ENCODE measurements at regions of chr19 and their contacts with region 1.

Region 1: DNA sequence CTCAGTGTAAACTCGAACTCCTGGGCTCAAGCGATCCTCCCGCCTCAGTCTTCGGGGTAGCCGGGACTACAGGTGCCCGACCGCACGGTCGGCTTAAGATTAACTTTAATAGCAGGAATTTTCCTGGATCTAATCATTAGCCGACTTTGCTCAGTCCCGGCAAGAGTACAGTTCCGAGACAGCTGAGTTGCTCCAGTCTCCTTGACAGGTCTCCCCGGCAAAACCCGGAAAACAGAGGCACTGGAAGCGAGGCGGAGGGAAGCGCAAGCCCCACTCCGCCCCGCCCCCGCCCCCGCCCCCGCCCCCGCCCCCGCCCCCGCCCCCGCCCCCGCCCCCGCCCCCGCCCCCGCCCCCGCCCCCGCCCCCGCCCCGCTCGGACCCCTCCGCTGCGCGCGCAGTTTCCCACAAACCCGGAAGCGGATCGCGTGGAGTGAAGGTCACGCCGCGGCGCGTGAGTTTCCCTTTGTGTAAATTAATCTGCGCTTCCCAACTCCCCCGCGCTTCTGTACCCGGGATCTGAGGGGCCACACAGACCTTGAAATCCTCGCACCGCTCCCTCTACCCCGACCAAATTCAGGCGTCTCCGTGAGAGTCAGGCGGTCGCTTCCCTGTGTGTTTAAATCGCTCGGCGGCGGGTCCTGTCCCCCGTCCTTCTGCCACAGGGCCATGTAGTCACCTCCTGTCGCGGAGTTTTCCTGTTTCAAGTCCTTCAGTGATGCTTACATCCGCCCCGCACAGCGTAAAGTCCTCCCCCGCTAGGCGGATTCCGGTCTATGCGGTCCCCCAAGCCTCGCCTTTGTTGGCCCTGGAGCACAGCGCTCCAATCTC is at the start of gene ZNF480:
- DNase-seq: peak; percentile 81 to 94 (median 88)
- ATAC-seq: peak; percentile 75 to 90 (median 88)
- H3K4me3 ChIP-seq: peak within 1 kb of the TSS; percentile 42 to 98 (median 86)
- H3K27ac ChIP-seq: peak within 1 kb of the TSS; percentile 85 to 98 (median 94)
- H3K4me1 ChIP-seq: peaks cover 0 to 18% (median 11%) of the 10 kb centered on the region in 12 donors
- H3K27me3 ChIP-seq: no peaks in the 10 kb centered on the region
- CTCF ChIP-seq: peak in 2 of 12 donors; percentile 6 to 16
- POLR2A ChIP-seq: peak in 1 of 2 donors; percentile 48
- total RNA-seq, gene ZNF480: 9.8 to 20.2 (median 13.3) TPM

Region 2: GRCh38 chr19:52200044-52200443 is 96.9 kb before region 1 on chr19:
- intact Hi-C with region 1: no loop called
- DNase-seq: peak in 4 of 5 donors; percentile 33 to 66 (median 39)
- ATAC-seq: peak; percentile 84 to 93 (median 88)
- H3K4me3 ChIP-seq: no peak overlapping the region
- H3K27ac ChIP-seq: peak overlapping the region; percentile 29 to 95 (median 78)
- H3K4me1 ChIP-seq: peaks cover 15 to 89% (median 61%) of the 10 kb centered on the region in 12 donors
- H3K27me3 ChIP-seq: no peaks in the 10 kb centered on the region
- CTCF ChIP-seq: no peak
- POLR2A ChIP-seq: peak in 1 of 2 donors; percentile 17

Region 3: GRCh38 chr19:52269338-52270261 is 27.4 kb before region 1 on chr19 and contains the start of gene ZNF766:
- intact Hi-C with region 1: loop called in 3 of 10 experiments (anchors 2 kb)
- DNase-seq: peak; percentile 97 to 98 (median 98)
- ATAC-seq: peak; percentile 100
- H3K4me3 ChIP-seq: peak within 1 kb of the TSS; percentile 61 to 99 (median 92)
- H3K27ac ChIP-seq: peak within 1 kb of the TSS; percentile 79 to 98 (median 91)
- H3K4me1 ChIP-seq: peaks cover 4 to 28% (median 15%) of the 10 kb centered on the region in 12 donors
- H3K27me3 ChIP-seq: no peaks in the 10 kb centered on the region
- CTCF ChIP-seq: no peak
- POLR2A ChIP-seq: peak; percentile 8 to 93
- total RNA-seq, gene ZNF766: 4.8 to 16.6 (median 10.7) TPM

Region 4: DNA sequence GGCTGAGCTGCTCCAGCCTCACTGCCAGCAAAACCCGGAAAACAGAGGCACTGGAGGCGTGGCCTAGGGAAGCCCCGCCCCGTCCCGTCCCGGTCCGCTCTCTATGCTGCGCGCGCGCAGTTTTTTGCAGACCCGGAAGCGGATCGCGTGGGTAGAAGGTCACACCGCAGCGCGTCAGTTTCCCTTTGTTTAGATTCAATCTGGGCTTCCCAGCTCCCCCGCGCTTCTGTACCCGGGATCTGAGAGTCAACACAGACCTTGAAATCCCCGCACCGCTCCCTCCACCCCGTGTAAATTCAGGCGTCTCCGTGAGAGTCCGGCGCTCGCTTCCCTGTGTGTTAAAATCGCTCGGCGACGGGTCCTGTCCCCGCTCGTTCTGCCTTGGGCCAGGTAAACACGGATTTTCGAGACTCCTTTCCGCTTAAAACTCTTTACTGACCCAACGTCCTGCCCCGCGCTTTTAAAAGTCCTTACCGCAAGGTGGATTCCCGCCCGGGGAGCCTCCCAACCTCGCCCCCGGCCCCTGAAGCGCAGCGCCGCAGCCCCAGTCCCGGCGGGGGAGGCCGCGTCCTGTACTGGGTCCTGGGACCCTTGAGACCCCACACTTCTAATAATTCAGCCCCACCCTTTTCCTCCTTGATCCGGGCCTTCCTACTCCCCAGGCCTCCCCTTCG is 39.3 kb after region 1 on chr19 and contains the start of gene ZNF610:
- intact Hi-C with region 1: loop called in 3 of 10 experiments (anchors 5 kb)
- DNase-seq: peak; percentile 92 to 94 (median 93)
- ATAC-seq: peak; percentile 99 to 100 (median 100)
- H3K4me3 ChIP-seq: peak within 1 kb of the TSS; percentile 57 to 98 (median 81)
- H3K27ac ChIP-seq: peak within 1 kb of the TSS; percentile 51 to 89 (median 78)
- H3K4me1 ChIP-seq: peaks cover 0 to 19% (median 7%) of the 10 kb centered on the region in 12 donors
- H3K27me3 ChIP-seq: no peaks in the 10 kb centered on the region
- CTCF ChIP-seq: no peak
- POLR2A ChIP-seq: peak in 1 of 2 donors; percentile 78
- total RNA-seq, gene ZNF610: 2.5 to 8.2 (median 3.4) TPM